ENCODE measurements at regions of chr3 and their contacts with region 1.

Region 1: DNA sequence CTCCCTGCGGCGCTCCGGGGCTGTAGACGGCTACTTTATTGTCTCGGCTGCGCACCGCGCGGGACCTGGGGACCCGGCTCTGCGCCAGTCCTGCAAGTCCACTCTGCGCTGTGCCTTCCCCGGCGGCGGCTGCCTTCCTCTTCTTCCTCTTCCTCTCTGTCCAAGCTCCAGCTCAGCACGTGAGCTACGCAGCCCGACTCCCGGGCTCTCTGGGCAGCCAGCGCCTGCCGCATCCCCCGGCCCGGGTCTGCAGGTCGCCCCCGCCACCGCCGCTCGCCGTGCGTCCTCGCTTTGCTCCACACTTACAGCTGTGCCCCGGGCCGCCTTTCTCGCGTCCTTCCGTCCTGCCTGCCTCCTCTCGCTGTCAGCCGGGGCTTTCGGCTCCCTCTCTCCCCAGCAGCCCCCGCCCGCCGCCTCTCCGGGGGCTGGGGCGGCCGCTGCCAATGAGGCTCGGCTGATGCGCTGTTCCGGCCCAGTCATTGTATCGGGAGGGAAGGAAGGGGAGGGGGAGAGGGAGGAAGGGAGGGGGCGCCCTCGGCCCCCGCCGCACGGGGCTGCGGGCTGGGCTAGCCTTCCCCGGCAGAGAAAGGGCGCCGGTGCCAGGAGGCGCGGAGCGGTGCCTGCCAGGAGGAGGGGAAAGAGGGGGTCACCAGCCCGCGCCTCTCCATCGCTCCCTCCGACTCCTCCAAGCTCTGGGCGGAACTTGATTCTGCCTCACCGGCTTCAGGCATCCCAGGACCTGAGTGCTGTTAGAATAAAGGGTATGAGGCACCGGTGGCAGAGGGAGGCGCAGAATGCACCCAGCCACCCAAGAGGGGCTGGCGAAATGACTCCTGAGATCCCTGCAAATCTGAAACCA is 156.6 kb upstream of the FRMD4B start:
- DNase-seq: peak; percentile 9 to 85 (median 80)
- H3K4me3 ChIP-seq: peak overlapping the region; percentile 51 to 88 (median 71)
- H3K27ac ChIP-seq: peak overlapping the region in 57 of 59 donors; percentile 21 to 97 (median 87)
- H3K27me3 ChIP-seq: peaks cover 0 to 32% (median 14%) of the 10 kb centered on the region in 45 donors
- CTCF ChIP-seq: peak in 6 of 56 donors; percentile 12 to 28 (median 18)

Region 2: DNA sequence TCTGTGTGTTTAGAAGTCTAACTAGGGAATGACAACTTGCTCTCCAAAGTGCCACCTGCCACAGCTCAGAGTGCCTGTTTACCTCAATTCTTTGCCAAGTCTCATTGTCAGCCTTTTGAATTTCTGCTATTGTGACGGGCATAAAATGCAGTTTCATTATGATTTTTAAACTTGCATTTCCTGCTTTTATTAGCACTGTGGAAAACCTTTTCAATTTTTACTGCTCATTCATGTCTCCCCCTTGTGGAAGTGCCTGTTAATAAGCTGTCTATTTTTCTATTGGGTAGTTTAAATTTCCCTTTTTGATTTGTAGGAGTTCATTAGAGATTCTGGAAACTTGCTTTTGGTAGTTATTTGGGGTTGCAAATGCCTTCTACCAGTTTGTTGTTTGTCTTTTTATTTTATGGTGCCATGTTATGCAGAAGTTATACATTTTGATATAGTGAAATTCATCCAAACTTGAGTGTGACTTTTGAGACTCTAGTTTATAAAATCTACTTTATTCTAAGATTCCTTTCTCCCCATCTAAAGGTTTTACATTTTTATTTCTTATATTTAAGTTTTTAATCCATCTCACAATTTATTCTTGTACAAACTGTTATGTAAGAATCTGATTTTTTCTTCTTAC is 102.7 kb before region 1 on chr3:
- intact Hi-C with region 1: loop called in 1 of 2 experiments (anchors 5 kb)
- DNase-seq: no peak
- H3K4me3 ChIP-seq: peak overlapping the region in 29 of 59 donors; percentile 8 to 47 (median 24)
- H3K27ac ChIP-seq: peak overlapping the region in 37 of 59 donors; percentile 0 to 78 (median 48)
- H3K27me3 ChIP-seq: no peaks in the 10 kb centered on the region
- CTCF ChIP-seq: peak; percentile 32 to 84 (median 70)

Region 3: GRCh38 chr3:69451594-69451993 is 90.9 kb before region 1 on chr3:
- intact Hi-C with region 1: loop called in 1 of 2 experiments (anchors 10 kb)
- DNase-seq: no peak
- H3K4me3 ChIP-seq: no peak overlapping the region
- H3K27ac ChIP-seq: peak overlapping the region in 12 of 59 donors; percentile 9 to 51 (median 26)
- H3K27me3 ChIP-seq: peaks cover 0 to 9% (median 0%) of the 10 kb centered on the region in 45 donors
- CTCF ChIP-seq: peak in 11 of 56 donors; percentile 8 to 29 (median 16)

Region 4: GRCh38 chr3:69602112-69602511 is 59.7 kb after region 1 on chr3:
- intact Hi-C with region 1: no loop called
- DNase-seq: no peak
- H3K4me3 ChIP-seq: no peak overlapping the region
- H3K27ac ChIP-seq: no peak overlapping the region
- H3K27me3 ChIP-seq: peaks cover 0 to 8% (median 0%) of the 10 kb centered on the region in 45 donors
- CTCF ChIP-seq: no peak

Region 5: GRCh38 chr3:69665026-69665737 is 122.7 kb after region 1 on chr3:
- intact Hi-C with region 1: loop called (anchors 5 to 10 kb)
- DNase-seq: no peak
- H3K4me3 ChIP-seq: no peak overlapping the region
- H3K27ac ChIP-seq: peak overlapping the region in 1 of 59 donors; percentile 4
- H3K27me3 ChIP-seq: no peaks in the 10 kb centered on the region
- CTCF ChIP-seq: no peak

Measured in dorsolateral prefrontal cortex (tissue), 120 donors.